ENCODE measurements at regions of chr5 and their contacts with region 1.

Region 1: GRCh38 chr5:107389130-107389774 is 281.5 kb downstream of the EFNA5 start:
- DNase-seq: peak; percentile 92
- ATAC-seq: peak; percentile 82
- H3K4me3 ChIP-seq: peak overlapping the region; percentile 43
- H3K27ac ChIP-seq: peak overlapping the region; percentile 69
- H3K4me1 ChIP-seq: peaks cover 22% of the 10 kb centered on the region
- H3K27me3 ChIP-seq: no peaks in the 10 kb centered on the region
- CTCF ChIP-seq: peak in 1 of 3 experiments; percentile 27; a peak in 1 of 6 replicates
- EP300 ChIP-seq: peak; percentile 89 to 90; a peak in 2 of 4 replicates
- POLR2A ChIP-seq: no peak
- RAD21 ChIP-seq: peak; percentile 50

Region 2: DNA sequence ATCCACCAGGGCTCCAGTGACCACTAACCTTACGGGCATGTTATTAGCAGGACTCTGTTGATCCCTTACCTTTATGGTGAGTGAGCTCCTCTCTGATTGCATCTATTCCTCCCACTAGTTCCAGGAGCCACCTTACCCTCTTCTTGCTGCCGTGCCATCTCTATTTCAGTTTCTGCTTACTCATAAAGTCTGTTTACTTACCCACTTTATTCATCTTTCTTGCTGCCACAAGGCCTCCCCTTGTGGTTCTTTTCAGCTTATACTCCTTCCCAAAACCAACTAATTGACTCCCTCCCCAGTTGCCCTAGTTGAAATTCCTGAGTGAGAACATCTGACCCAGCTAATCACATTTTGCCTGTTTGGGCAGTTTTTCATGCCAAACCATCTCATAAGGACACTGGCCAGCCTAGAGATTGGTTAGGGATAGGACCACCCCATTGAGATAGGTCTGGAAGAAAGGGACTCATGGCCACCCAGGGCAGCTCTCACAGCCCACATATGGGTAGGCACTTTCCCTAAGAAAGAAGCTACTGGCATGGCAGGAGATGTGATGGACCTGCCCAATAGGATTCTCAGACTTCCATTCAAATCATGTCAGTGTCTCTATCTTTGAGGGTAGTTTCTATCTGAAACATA is 131.2 kb before region 1 on chr5:
- CTCF ChIA-PET with region 1: no interaction called
- POLR2A ChIA-PET with region 1: no interaction called
- RAD21 ChIA-PET with region 1: no interaction called
- SMC1A ChIA-PET with region 1: interaction called, 3 read pairs
- in situ Hi-C with region 1: no loop called
- intact Hi-C with region 1: loop called (anchors 5 kb)
- DNase-seq: peak; percentile 20
- ATAC-seq: peak; percentile 60
- H3K4me3 ChIP-seq: no peak overlapping the region
- H3K27ac ChIP-seq: no peak overlapping the region
- H3K4me1 ChIP-seq: peaks cover 1% of the 10 kb centered on the region; the same call in 1 of the 2 replicates
- H3K27me3 ChIP-seq: no peaks in the 10 kb centered on the region
- CTCF ChIP-seq: no peak
- EP300 ChIP-seq: no peak
- POLR2A ChIP-seq: no peak
- RAD21 ChIP-seq: no peak

Region 3: GRCh38 chr5:107365320-107366109 is 23.7 kb before region 1 on chr5:
- CTCF ChIA-PET with region 1: interaction called, 24 read pairs
- POLR2A ChIA-PET with region 1: interaction called, 4 read pairs
- RAD21 ChIA-PET with region 1: interaction called, 42 read pairs
- SMC1A ChIA-PET with region 1: interaction called, 50 read pairs
- in situ Hi-C with region 1: no loop called
- intact Hi-C with region 1: loop called (anchors 1 kb)
- DNase-seq: peak; percentile 92
- ATAC-seq: peak; percentile 81
- H3K4me3 ChIP-seq: 0 out of 2 replicates have a peak overlapping the region, but pooled peaks have one; percentile 6
- H3K27ac ChIP-seq: peak overlapping the region; percentile 47
- H3K4me1 ChIP-seq: peaks cover 21% of the 10 kb centered on the region
- H3K27me3 ChIP-seq: no peaks in the 10 kb centered on the region
- CTCF ChIP-seq: 0 out of 6 replicates have a peak, but pooled peaks of 1 of the 3 experiments have one; percentile 3
- EP300 ChIP-seq: peak; percentile 12 to 32; a peak in 2 of 4 replicates
- POLR2A ChIP-seq: no peak
- RAD21 ChIP-seq: no peak

Region 4: GRCh38 chr5:107378218-107378899 is 10.9 kb before region 1 on chr5:
- CTCF ChIA-PET with region 1: interaction called, 6 read pairs
- POLR2A ChIA-PET with region 1: no interaction called
- RAD21 ChIA-PET with region 1: no interaction called
- SMC1A ChIA-PET with region 1: interaction called, 13 read pairs
- in situ Hi-C with region 1: no loop called
- intact Hi-C with region 1: no loop called
- DNase-seq: no peak
- ATAC-seq: peak; percentile 54
- H3K4me3 ChIP-seq: no peak overlapping the region
- H3K27ac ChIP-seq: no peak overlapping the region
- H3K4me1 ChIP-seq: no peaks in the 10 kb centered on the region
- H3K27me3 ChIP-seq: no peaks in the 10 kb centered on the region
- CTCF ChIP-seq: no peak
- EP300 ChIP-seq: no peak; a peak in 1 of 4 replicates
- POLR2A ChIP-seq: no peak
- RAD21 ChIP-seq: no peak

Region 5: GRCh38 chr5:107812570-107813141 is 423.4 kb after region 1 on chr5:
- CTCF ChIA-PET with region 1: no interaction called
- POLR2A ChIA-PET with region 1: no interaction called
- RAD21 ChIA-PET with region 1: no interaction called
- SMC1A ChIA-PET with region 1: no interaction called
- in situ Hi-C with region 1: no loop called
- intact Hi-C with region 1: loop called (anchors 10 kb)
- DNase-seq: peak; percentile 79
- ATAC-seq: peak; percentile 88
- H3K4me3 ChIP-seq: peak overlapping the region; percentile 44; the same call in 1 of the 2 replicates
- H3K27ac ChIP-seq: peak overlapping the region; percentile 78
- H3K4me1 ChIP-seq: peaks cover 29% of the 10 kb centered on the region
- H3K27me3 ChIP-seq: no peaks in the 10 kb centered on the region
- CTCF ChIP-seq: no peak
- EP300 ChIP-seq: peak; percentile 86 to 96
- POLR2A ChIP-seq: no peak
- RAD21 ChIP-seq: peak; percentile 30; the same call in 1 of the 2 replicates

Measured in GM12878 (cell line).